HepG2 (cell line): ENCODE measurements at regions of chr6 and their contacts with region 1.

Region 1: DNA sequence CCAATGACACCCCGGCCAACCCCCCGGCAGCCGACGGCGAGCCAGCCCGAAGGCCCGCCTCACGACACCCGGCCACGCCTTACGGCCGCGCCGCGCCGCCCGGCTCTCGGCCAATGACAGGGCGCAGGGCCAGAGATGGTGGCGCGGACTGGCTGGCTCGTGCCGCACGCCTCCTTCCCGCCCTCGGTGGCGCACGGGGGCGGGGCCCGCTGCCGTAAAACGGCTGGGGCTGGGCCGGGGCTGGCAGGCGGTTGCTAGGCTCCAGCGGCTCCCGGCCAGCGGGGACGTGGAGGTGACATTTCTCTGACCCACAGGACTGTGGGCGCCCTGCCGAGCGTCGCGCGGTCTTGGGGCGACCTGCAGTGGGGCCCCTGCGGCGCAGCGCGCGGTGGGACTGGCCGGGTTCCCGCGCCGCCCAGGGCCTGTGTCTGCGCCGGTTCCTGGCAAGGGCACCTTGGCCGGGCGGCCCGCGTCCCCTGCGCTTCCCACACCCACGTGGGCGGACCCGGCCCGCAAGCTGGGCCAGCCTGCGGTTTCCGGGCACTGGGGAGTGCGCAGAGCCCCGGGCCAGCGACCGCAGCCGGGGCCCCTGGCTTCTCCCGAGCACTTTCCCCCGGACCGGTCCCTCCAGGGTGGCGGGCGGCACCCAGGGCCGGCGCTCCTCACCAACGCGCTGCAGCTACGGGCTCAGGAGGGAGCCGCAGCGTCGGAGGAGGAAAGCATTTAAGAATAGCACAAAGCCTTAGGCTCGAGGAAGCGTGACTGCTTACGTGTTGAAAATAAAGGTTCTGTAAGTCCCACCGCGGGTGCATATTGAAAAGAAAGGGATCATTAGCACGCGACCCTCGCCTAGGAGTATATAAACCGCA is at the start of gene MPC1:
- DNase-seq: peak; percentile 94
- ATAC-seq: peak; percentile 90
- H3K4me3 ChIP-seq: peak within 1 kb of the TSS; percentile 98 to 100 (median 99)
- H3K27ac ChIP-seq: peak within 1 kb of the TSS; percentile 93
- H3K4me1 ChIP-seq: peaks cover 69% of the 10 kb centered on the region
- H3K27me3 ChIP-seq: no peaks in the 10 kb centered on the region; a peak in 1 of 5 replicates
- CTCF ChIP-seq: peak; percentile 16
- EP300 ChIP-seq: 0 out of 4 replicates have a peak, but pooled peaks of 1 of the 2 experiments have one; percentile 9
- POLR2A ChIP-seq: peak in 1 of 2 experiments; percentile 81; a peak in 2 of 4 replicates
- RAD21 ChIP-seq: peak; percentile 65
- total RNA-seq, gene MPC1: 214 and 289 TPM in 2 replicates

Region 2: GRCh38 chr6:166068768-166069167 is 314.4 kb before region 1 on chr6:
- CTCF ChIA-PET with region 1: no interaction called
- POLR2A ChIA-PET with region 1: no interaction called
- in situ Hi-C with region 1: no loop called
- intact Hi-C with region 1: no loop called
- DNase-seq: no peak
- ATAC-seq: no peak
- H3K4me3 ChIP-seq: no peak overlapping the region
- H3K27ac ChIP-seq: no peak overlapping the region
- H3K4me1 ChIP-seq: no peaks in the 10 kb centered on the region
- H3K27me3 ChIP-seq: peaks cover 0 to 6% of the 10 kb centered on the region in 2 experiments; a peak in 1 of 5 replicates
- CTCF ChIP-seq: no peak
- EP300 ChIP-seq: no peak
- POLR2A ChIP-seq: no peak
- RAD21 ChIP-seq: no peak

Region 3: GRCh38 chr6:166313255-166314070 is 69.7 kb before region 1 on chr6:
- CTCF ChIA-PET with region 1: interaction called, 11 read pairs
- POLR2A ChIA-PET with region 1: interaction called, 4 read pairs
- in situ Hi-C with region 1: no loop called
- intact Hi-C with region 1: loop called (anchors 1 kb)
- DNase-seq: peak; percentile 41
- ATAC-seq: peak; percentile 65
- H3K4me3 ChIP-seq: no peak overlapping the region
- H3K27ac ChIP-seq: no peak overlapping the region
- H3K4me1 ChIP-seq: peaks cover 20% of the 10 kb centered on the region
- H3K27me3 ChIP-seq: peaks cover 7 to 26% of the 10 kb centered on the region in 2 experiments; a peak in 4 of 5 replicates
- CTCF ChIP-seq: peak; percentile 84
- EP300 ChIP-seq: no peak
- POLR2A ChIP-seq: no peak
- RAD21 ChIP-seq: peak; percentile 72

Region 4: GRCh38 chr6:166342349-166343149 is 40.6 kb before region 1 on chr6 and contains the start of gene SFT2D1:
- CTCF ChIA-PET with region 1: no interaction called
- POLR2A ChIA-PET with region 1: interaction called, 23 read pairs
- in situ Hi-C with region 1: no loop called
- intact Hi-C with region 1: loop called (anchors 1 kb)
- DNase-seq: peak; percentile 77
- ATAC-seq: peak; percentile 97
- H3K4me3 ChIP-seq: peak within 1 kb of the TSS; percentile 89 to 99 (median 98)
- H3K27ac ChIP-seq: peak within 1 kb of the TSS; percentile 80
- H3K4me1 ChIP-seq: peaks cover 78% of the 10 kb centered on the region
- H3K27me3 ChIP-seq: no peaks in the 10 kb centered on the region; a peak in 1 of 5 replicates
- CTCF ChIP-seq: peak; percentile 29
- EP300 ChIP-seq: peak; percentile 4 to 20; a peak in 2 of 4 replicates
- POLR2A ChIP-seq: peak; percentile 94 to 98
- RAD21 ChIP-seq: peak; percentile 32; the same call in 1 of the 2 replicates
- total RNA-seq, gene SFT2D1: 90.7 and 115 TPM in 2 replicates

Region 5: DNA sequence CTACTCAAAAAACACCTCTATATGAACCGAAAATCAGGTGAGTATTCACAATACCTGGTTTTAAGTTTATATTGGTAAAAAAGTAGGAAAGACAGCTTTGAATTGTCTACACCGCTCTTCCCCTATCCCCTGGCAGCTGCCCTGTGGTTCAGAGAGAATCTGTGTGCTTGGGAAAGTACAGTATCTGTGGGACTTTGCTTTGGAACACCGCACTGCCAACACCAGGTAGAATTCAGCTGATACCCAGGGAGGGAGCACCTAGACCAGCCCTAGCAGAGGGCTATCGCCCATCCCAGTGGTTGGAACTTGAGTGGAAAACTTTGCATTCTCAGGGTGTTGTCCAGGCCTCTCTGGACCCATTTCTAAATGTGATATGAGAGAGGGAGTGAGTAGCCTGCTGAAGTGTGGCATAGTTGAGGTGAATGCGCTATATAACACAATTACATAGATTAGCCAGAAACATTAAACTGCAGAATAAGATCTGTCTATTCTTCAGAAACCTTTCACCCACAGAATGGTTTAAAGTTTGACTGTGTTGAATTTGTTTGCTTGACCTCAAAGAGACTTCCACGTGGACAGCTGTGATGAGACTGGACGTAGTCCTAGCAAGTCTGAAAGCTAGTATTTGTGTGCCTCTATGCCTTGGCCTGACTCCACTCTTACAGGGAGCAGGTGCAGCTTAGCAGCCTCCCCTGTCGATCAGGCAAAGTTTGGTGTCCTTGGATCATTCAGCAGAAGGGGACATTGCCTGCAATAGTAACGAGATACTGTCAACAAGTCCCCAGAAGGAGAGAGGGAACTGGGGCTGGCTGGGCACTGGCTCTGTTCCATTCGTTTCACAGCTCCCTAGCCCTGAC is 11.1 kb after region 1 on chr6:
- CTCF ChIA-PET with region 1: no interaction called
- POLR2A ChIA-PET with region 1: interaction called, 36 read pairs
- in situ Hi-C with region 1: no loop called
- intact Hi-C with region 1: no loop called
- DNase-seq: peak; percentile 30
- ATAC-seq: peak; percentile 84
- H3K4me3 ChIP-seq: no peak overlapping the region
- H3K27ac ChIP-seq: peak overlapping the region; percentile 68
- H3K4me1 ChIP-seq: peaks cover 70% of the 10 kb centered on the region
- H3K27me3 ChIP-seq: no peaks in the 10 kb centered on the region
- CTCF ChIP-seq: peak; percentile 58
- EP300 ChIP-seq: no peak; a peak in 1 of 4 replicates
- POLR2A ChIP-seq: peak in 1 of 2 experiments; percentile 20; a peak in 1 of 4 replicates
- RAD21 ChIP-seq: no peak

Region 6: GRCh38 chr6:166411721-166412151 is 28.6 kb after region 1 on chr6:
- CTCF ChIA-PET with region 1: no interaction called
- POLR2A ChIA-PET with region 1: no interaction called
- in situ Hi-C with region 1: no loop called
- intact Hi-C with region 1: no loop called
- DNase-seq: no peak
- ATAC-seq: no peak
- H3K4me3 ChIP-seq: no peak overlapping the region
- H3K27ac ChIP-seq: no peak overlapping the region
- H3K4me1 ChIP-seq: peaks cover 16% of the 10 kb centered on the region
- H3K27me3 ChIP-seq: peaks cover 6 to 39% of the 10 kb centered on the region in 2 experiments
- CTCF ChIP-seq: no peak
- EP300 ChIP-seq: no peak
- POLR2A ChIP-seq: no peak
- RAD21 ChIP-seq: no peak